ENCODE measurements at regions of chr15 and their contacts with region 1.

Region 1: GRCh38 chr15:93485438-93486327 is 396.7 kb upstream of the RGMA start:
- DNase-seq: peak in 5 of 6 donors; percentile 62 to 87 (median 81)
- ATAC-seq: peak; percentile 84 to 88 (median 88)
- H3K4me3 ChIP-seq: no peak overlapping the region
- H3K27ac ChIP-seq: peak overlapping the region; percentile 55 to 85 (median 69)
- H3K4me1 ChIP-seq: peaks cover 43 to 48% (median 43%) of the 10 kb centered on the region in 3 donors
- H3K27me3 ChIP-seq: no peaks in the 10 kb centered on the region
- CTCF ChIP-seq: peak in 3 of 4 donors; percentile 12 to 35 (median 17)

Region 2: GRCh38 chr15:93321881-93322289 is 163.8 kb before region 1 on chr15:
- intact Hi-C with region 1: no loop called
- DNase-seq: peak in 1 of 6 donors; percentile 34
- ATAC-seq: peak in 3 of 4 donors; percentile 67 to 92 (median 81)
- H3K4me3 ChIP-seq: no peak overlapping the region
- H3K27ac ChIP-seq: peak overlapping the region in 2 of 4 donors; percentile 12 to 33
- H3K4me1 ChIP-seq: no peaks in the 10 kb centered on the region
- H3K27me3 ChIP-seq: no peaks in the 10 kb centered on the region
- CTCF ChIP-seq: no peak

Region 3: GRCh38 chr15:93382200-93382820 is 103.4 kb before region 1 on chr15:
- intact Hi-C with region 1: loop called in 1 of 3 experiments (anchors 10 kb)
- DNase-seq: peak in 4 of 6 donors; percentile 62 to 85 (median 82)
- ATAC-seq: peak; percentile 83 to 92 (median 89)
- H3K4me3 ChIP-seq: peak overlapping the region in 1 of 4 donors; percentile 6
- H3K27ac ChIP-seq: peak overlapping the region; percentile 70 to 86 (median 76)
- H3K4me1 ChIP-seq: peaks cover 31 to 44% (median 32%) of the 10 kb centered on the region in 3 donors
- H3K27me3 ChIP-seq: no peaks in the 10 kb centered on the region
- CTCF ChIP-seq: no peak